ENCODE measurements at regions of chr12 and their contacts with region 1.

Region 1: GRCh38 chr12:1533602-1534304 is 60.6 kb downstream of the FBXL14 start:
- DNase-seq: no peak
- H3K4me3 ChIP-seq: no peak overlapping the region
- H3K27ac ChIP-seq: no peak overlapping the region
- H3K4me1 ChIP-seq: no peaks in the 10 kb centered on the region
- H3K27me3 ChIP-seq: no peaks in the 10 kb centered on the region
- CTCF ChIP-seq: no peak
- POLR2A ChIP-seq: no peak

Region 2: GRCh38 chr12:1573960-1574864 is 40.5 kb after region 1 on chr12:
- intact Hi-C with region 1: loop called (anchors 5 kb)
- DNase-seq: no peak
- H3K4me3 ChIP-seq: no peak overlapping the region
- H3K27ac ChIP-seq: peak overlapping the region; percentile 81 to 86
- H3K4me1 ChIP-seq: peaks cover 15% of the 10 kb centered on the region
- H3K27me3 ChIP-seq: no peaks in the 10 kb centered on the region
- CTCF ChIP-seq: no peak
- POLR2A ChIP-seq: no peak

Region 3: GRCh38 chr12:2447861-2448260 is 914.1 kb after region 1 on chr12:
- intact Hi-C with region 1: no loop called
- DNase-seq: no peak
- H3K4me3 ChIP-seq: no peak overlapping the region
- H3K27ac ChIP-seq: no peak overlapping the region
- H3K4me1 ChIP-seq: no peaks in the 10 kb centered on the region
- H3K27me3 ChIP-seq: no peaks in the 10 kb centered on the region
- CTCF ChIP-seq: no peak
- POLR2A ChIP-seq: no peak

Measured in prostate gland (tissue), 2 donors.